ENCODE measurements at regions of chr3 and their contacts with region 1.

Region 1: DNA sequence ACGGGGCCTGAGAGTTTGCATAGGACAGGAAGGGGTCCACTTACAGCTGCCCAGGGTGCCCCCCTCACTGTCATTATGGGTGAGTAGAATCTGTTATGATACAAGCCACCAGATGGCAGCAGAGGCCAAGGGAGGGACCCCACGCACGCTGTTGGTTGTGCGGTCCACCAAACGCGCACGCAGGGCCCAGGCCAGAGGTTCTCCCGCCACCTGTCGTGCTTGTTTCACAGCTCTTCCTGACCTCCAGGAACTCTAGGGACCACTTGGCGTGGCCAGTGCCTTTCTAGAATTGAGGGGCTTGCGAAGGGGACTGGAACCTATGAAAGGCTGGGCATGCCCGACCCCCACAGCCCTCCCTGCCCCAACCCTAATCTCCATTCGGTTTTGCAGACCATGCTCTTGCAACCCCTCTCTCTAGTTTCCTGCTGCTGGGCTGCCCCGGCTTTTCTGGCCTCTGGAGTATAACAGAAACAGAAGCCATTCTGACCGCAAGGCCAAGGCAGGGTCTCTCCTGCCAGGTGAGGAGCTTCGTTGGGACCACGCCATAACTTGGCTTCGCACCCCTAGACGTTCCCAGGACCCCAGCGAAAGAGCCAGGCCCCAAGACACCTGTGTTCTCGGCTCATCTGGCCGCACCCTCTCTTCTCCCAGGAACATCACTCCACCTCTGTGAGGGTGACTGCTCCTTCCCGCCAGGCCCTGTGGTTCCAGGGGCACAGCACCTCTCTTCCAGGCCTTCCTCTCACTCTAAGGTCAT is 46.0 kb downstream of the ALDH1L1 start:
- DNase-seq: no peak
- ATAC-seq: peak; percentile 84

Region 2: DNA sequence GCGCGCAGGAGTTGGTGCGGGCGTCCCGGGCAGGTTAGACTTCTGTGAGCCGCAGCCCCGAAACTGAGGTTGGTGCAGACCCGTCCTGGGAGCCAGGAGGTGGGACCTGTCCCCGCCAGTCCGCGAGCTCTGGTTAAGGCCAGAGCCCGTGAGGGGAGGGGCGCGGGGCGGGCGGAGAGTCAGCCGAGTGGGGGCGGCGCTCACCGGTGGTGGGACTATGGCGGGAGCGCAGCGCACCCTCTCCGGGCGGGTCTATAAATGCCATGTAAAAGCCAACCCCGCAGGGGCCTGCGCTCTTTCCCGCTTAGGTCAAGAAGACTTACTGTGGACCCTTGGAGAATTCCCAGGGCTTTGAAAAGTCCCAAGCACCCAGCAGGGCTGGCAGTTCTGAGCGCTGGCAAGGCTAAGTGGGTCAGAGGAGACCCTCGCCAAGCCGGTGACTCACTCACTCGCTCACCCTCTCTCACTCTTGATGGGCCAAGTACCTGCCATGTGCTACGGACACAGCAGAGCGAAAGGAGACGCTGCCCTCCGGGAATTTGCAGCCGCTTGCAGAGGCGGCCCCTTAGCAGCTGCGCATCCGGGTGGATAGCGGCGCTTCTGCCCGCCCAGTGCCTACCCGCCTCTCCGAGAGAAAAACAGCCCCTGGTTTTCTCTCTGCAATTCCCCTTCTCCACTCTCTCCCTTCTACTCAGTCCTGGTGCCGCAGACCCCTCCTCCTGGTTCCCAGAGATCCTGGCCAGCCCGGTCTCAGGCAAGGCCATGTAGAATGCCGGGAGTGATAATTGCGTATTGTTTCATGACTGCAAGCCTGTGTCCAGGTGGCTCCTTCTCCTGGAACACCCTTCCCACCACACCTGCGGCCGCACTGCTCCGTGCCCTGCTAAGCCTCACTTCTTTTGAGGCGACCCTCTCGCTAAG is 46.3 kb after region 1 on chr3 and contains the start of gene ALDH1L1:
- intact Hi-C with region 1: loop called (anchors 5 kb)
- DNase-seq: peak; percentile 91
- ATAC-seq: peak; percentile 95
- total RNA-seq, gene ALDH1L1: 23.1 TPM

Region 3: GRCh38 chr3:126197854-126198584 is 63.6 kb after region 1 on chr3:
- intact Hi-C with region 1: loop called (anchors 1 kb)
- DNase-seq: no peak
- ATAC-seq: peak; percentile 90

Region 4: DNA sequence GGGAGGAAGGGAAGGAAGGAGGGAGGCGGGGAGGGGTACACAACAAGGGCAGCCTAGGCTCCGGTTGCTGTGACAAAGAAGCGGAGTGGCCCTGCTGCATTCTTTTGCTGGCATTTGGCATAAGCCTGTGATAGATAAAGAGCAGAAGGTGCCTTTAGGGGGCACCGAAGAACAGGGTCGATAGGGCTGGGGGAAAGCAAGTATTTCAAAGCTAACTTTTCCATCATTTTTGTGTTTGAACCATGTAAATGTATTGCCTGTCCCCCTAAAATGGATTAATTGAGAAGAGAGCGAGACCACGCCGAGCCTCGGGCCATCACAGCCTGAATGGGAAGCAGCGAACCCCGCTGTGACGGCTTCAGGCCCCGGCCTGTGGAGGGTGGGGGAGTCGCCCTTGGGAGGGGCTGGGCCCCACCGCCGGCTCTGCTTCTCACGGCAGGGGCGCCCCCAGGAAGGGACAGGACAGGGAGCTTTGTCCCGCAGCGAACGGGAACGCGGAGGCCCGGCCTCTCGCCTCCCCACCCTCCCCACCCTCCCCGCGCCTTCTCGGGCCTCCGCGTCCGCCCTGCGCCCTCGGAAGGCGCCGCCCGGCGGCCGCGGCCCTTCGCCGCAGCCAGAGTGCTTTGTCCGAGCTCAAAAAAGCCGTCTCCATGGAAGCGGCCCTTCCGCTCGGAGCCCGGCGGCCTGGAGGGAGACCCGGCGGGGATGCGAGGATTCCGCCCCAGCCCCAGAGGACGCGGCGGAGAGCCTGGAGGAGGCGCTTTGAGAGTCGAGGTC is 78.4 kb after region 1 on chr3:
- intact Hi-C with region 1: loop called (anchors 5 kb)
- DNase-seq: peak; percentile 80
- ATAC-seq: peak; percentile 77

Region 5: GRCh38 chr3:126245811-126246727 is 111.7 kb after region 1 on chr3:
- intact Hi-C with region 1: loop called (anchors 1 kb)
- DNase-seq: peak; percentile 72
- ATAC-seq: peak; percentile 89

Region 6: DNA sequence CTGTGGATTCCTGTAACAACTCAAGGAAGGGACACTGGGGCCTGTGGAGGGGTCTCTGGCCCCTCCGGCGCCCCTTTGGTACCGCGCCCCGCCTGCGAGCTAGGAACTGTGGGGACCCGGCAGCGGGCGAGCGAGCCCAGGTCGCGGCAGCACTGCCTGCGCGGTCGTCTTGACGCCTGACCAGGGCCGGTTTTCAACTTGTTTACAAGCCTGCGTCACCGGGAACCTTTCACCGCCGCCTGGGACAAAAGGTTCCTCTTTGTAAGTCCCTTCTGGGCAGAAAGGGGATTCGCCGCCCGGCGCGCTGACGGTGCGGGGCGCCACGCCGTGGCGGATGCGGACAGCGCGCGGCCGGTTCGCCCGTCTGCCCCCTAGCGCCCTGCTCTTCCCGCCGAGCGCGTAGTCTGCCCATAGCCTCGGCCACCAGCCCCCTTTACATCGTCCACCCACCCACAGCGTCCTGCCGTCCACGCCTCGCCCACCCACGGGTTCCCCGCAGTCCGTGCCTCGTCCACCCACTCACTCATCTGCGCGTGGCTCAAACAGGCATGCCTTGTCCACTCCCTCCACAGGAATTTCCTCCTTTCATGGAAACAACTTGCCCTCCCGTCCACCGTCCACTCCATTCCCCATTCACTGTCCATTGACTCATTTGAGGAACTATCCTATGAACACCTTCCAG is 254.9 kb after region 1 on chr3:
- intact Hi-C with region 1: loop called (anchors 1 kb)
- DNase-seq: peak; percentile 95
- ATAC-seq: peak; percentile 97